SK-N-SH (cell line): ENCODE measurements at regions of chr19 and their contacts with region 1.

Region 1: DNA sequence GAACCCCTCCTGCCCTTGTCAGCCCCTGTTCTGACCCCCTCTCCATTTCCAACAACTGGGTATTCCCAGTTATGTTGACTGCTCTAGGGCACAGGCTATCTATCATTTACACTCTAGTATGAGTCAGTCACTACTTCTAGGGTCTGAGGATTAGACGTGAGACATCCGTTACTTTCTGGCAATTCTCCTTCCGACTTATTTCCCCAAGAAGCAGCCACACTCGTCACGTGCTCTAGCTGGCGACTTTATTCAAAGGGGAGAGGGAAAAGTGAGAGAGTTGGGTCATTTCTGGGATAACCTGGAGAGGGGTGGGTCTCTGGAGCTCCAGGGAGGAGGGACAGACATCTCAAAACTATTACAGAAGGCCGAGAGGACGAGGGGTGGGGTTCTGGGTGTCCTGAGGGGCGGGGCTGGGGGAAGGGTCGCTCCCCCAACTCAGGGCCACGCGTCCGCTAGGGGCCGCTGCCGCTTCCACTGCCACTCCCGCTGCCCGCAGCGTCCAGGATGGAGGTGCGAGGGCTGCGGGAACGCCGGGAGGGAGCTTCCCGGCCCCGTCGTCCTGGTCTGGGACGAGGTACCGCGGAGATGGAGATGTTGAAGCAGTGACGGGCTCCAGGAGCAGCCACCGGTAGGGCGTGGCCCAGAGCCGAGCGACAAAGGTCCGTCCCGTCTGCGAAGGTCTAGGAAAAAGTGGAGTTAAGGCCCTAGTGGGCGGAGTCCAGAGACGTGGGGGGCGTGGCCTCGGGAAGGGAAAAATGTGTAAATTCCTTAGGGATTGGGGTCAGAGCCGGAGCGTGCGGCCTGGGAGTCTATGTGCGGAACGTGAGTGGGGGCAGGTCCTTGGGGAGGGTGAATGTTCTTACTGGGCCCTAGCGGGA is 8.9 kb downstream of the RTBDN start:
- DNase-seq: peak; percentile 88
- H3K4me3 ChIP-seq: peak overlapping the region in 1 of 2 experiments; percentile 15; a peak in 1 of 4 replicates
- H3K27ac ChIP-seq: no peak overlapping the region
- H3K4me1 ChIP-seq: peaks cover 0 to 8% of the 10 kb centered on the region in 2 experiments; a peak in 1 of 4 replicates
- H3K27me3 ChIP-seq: no peaks in the 10 kb centered on the region
- CTCF ChIP-seq: peak; percentile 48
- EP300 ChIP-seq: no peak
- RAD21 ChIP-seq: peak; percentile 36

Region 2: DNA sequence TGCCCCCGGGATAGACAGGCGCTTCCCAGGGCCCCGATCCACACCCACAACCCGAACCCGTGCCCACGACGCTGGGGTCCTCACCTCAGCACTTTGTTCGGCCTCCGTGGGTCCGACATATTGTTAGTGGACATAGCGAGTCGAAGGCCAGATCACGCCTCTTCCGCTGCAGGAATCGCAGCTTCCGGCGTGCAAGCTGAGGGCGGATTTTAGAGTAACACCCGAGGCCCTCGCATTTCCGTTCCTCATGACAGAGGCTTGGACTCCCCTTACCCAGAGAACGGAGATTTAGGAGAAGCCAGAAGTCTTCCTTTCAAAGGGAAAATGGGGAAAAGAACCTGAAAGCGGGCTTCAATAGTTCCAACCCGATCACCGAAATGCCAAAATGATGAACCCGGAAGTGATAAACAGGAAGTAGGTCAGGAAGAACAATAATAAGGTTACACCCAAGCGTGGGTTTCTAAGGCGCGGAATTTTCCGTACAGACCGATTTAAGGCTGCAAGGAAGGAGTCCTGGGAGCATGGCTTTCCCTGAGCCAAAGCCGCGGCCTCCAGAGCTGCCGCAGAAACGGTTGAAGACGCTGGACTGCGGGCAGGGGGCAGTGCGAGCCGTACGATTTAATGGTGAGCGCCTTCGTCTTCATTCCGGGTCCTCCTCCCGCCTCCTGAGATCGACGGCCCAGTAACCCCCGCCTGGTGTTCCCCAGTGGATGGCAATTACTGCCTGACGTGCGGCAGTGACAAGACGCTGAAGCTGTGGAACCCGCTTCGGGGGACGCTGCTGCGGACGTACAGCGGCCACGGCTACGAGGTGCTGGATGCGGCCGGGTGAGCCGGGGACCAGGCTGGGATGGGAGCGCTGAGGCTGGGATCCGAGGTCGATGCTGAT is 156.0 kb before region 1 on chr19:
- CTCF ChIA-PET with region 1: no interaction called
- POLR2A ChIA-PET with region 1: no interaction called
- DNase-seq: peak; percentile 82
- H3K4me3 ChIP-seq: peak overlapping the region; percentile 80 to 85
- H3K27ac ChIP-seq: peak overlapping the region; percentile 89 to 96
- H3K4me1 ChIP-seq: peaks cover 5 to 35% of the 10 kb centered on the region in 2 experiments; a peak in 2 of 4 replicates
- H3K27me3 ChIP-seq: no peaks in the 10 kb centered on the region
- CTCF ChIP-seq: peak; percentile 20; the same call in 1 of the 2 replicates
- EP300 ChIP-seq: no peak
- RAD21 ChIP-seq: no peak

Region 3: DNA sequence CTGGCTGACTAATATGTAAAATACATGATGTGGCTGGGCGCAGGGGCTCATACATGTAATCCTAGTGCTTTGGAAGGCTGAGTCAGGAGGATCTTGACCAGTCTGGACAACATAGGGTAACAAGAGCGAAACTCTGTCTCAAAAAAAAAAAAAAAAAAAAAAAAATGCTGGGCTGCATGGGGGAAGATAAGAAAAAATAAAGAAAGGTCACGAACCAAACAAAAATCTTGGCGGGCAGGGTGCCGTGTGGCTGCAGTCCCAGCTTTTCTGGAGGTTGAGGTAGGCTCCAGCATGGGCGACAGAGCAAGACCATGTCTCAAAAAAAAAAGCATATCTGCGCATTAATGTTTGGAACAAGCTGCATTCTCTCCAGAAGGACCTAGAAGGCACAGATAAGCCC is 10.4 kb before region 1 on chr19:
- CTCF ChIA-PET with region 1: interaction called, 48 read pairs
- POLR2A ChIA-PET with region 1: interaction called, 3 read pairs
- DNase-seq: no peak
- H3K4me3 ChIP-seq: no peak overlapping the region
- H3K27ac ChIP-seq: no peak overlapping the region
- H3K4me1 ChIP-seq: no peaks in the 10 kb centered on the region
- H3K27me3 ChIP-seq: no peaks in the 10 kb centered on the region
- CTCF ChIP-seq: no peak
- EP300 ChIP-seq: no peak
- RAD21 ChIP-seq: no peak

Region 4: GRCh38 chr19:12838182-12838885 is 12.8 kb after region 1 on chr19 and contains the start of gene MAST1:
- CTCF ChIA-PET with region 1: interaction called, 18 read pairs
- POLR2A ChIA-PET with region 1: interaction called, 3 read pairs
- DNase-seq: peak; percentile 94
- H3K4me3 ChIP-seq: peak within 1 kb of the TSS; percentile 73 to 81
- H3K27ac ChIP-seq: peak within 1 kb of the TSS in 1 of 2 experiments; percentile 76; a peak in 2 of 4 replicates
- H3K4me1 ChIP-seq: peaks cover under 1 to 47% of the 10 kb centered on the region in 2 experiments; a peak in 2 of 4 replicates
- H3K27me3 ChIP-seq: no peaks in the 10 kb centered on the region
- CTCF ChIP-seq: peak; percentile 60
- EP300 ChIP-seq: no peak
- RAD21 ChIP-seq: peak; percentile 28; the same call in 1 of the 2 replicates
- polyA plus RNA-seq, gene MAST1: 4.3 and 9.7 TPM in 2 replicates